ENCODE measurements at regions of chr14 and their contacts with region 1.

Region 1: GRCh38 chr14:91177073-91178034 is 63.5 kb downstream of the DGLUCY start:
- DNase-seq: peak; percentile 46 to 76 (median 69)
- H3K4me3 ChIP-seq: no peak overlapping the region
- H3K4me3 Mint-ChIP-seq: peak overlapping the region in 1 of 7 donors; percentile 34
- H3K27ac ChIP-seq: no peak overlapping the region
- H3K27ac Mint-ChIP-seq: peak overlapping the region; percentile 70 to 95 (median 80)
- H3K4me1 ChIP-seq: peaks cover 10% of the 10 kb centered on the region
- H3K4me1 Mint-ChIP-seq: peaks cover 11 to 18% (median 16%) of the 10 kb centered on the region in 3 donors
- H3K27me3 ChIP-seq: no peaks in the 10 kb centered on the region
- H3K27me3 Mint-ChIP-seq: peaks cover 0 to 1% of the 10 kb centered on the region in 2 donors

Region 2: DNA sequence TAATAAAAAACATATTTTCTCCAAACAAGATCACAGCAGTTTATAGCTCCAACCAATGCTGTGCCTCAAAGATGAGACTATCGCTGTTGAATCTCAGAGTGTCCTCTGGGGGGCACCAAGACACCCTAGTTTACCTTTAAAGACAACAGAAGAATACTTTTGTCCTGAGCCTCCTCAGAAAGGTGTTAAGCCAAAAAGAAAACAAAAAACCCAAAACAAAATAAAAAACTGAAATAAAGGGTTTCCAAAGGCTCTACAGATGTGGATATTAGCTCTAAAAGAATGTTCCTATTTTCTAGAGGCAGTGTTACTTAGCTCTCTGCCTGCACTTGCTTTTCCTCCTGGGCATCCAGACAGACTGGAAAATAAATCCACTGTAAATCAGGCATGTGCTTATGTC is 274.3 kb before region 1 on chr14:
- CTCF ChIA-PET with region 1: interaction called, 120 read pairs
- POLR2A ChIA-PET with region 1: interaction called, 7 read pairs
- DNase-seq: peak; percentile 24 to 66 (median 45)
- H3K4me3 ChIP-seq: no peak overlapping the region
- H3K4me3 Mint-ChIP-seq: no peak overlapping the region
- H3K27ac ChIP-seq: no peak overlapping the region
- H3K27ac Mint-ChIP-seq: peak overlapping the region in 2 of 8 donors; percentile 38 to 48
- H3K4me1 ChIP-seq: no peaks in the 10 kb centered on the region
- H3K4me1 Mint-ChIP-seq: peaks cover 0 to 7% (median 0%) of the 10 kb centered on the region in 3 donors
- H3K27me3 ChIP-seq: no peaks in the 10 kb centered on the region
- H3K27me3 Mint-ChIP-seq: no peaks in the 10 kb centered on the region

Region 3: GRCh38 chr14:91164685-91165084 is 12.7 kb before region 1 on chr14:
- CTCF ChIA-PET with region 1: interaction called, 15 read pairs
- POLR2A ChIA-PET with region 1: no interaction called
- DNase-seq: no peak
- H3K4me3 ChIP-seq: no peak overlapping the region
- H3K4me3 Mint-ChIP-seq: no peak overlapping the region
- H3K27ac ChIP-seq: no peak overlapping the region
- H3K27ac Mint-ChIP-seq: peak overlapping the region in 5 of 8 donors; percentile 12 to 79 (median 39)
- H3K4me1 ChIP-seq: no peaks in the 10 kb centered on the region
- H3K4me1 Mint-ChIP-seq: peaks cover 0 to 2% (median 0%) of the 10 kb centered on the region in 3 donors
- H3K27me3 ChIP-seq: no peaks in the 10 kb centered on the region
- H3K27me3 Mint-ChIP-seq: no peaks in the 10 kb centered on the region

Region 4: GRCh38 chr14:91220581-91221274 is 43.4 kb after region 1 on chr14:
- CTCF ChIA-PET with region 1: interaction called, 10 read pairs
- POLR2A ChIA-PET with region 1: no interaction called
- DNase-seq: no peak
- H3K4me3 ChIP-seq: no peak overlapping the region
- H3K4me3 Mint-ChIP-seq: no peak overlapping the region
- H3K27ac ChIP-seq: no peak overlapping the region
- H3K27ac Mint-ChIP-seq: peak overlapping the region in 7 of 8 donors; percentile 43 to 87 (median 58)
- H3K4me1 ChIP-seq: peaks cover 25% of the 10 kb centered on the region
- H3K4me1 Mint-ChIP-seq: peaks cover 37 to 62% (median 54%) of the 10 kb centered on the region in 3 donors
- H3K27me3 ChIP-seq: no peaks in the 10 kb centered on the region
- H3K27me3 Mint-ChIP-seq: no peaks in the 10 kb centered on the region

Region 5: GRCh38 chr14:91249841-91250616 is 72.7 kb after region 1 on chr14:
- CTCF ChIA-PET with region 1: interaction called, 43 read pairs
- POLR2A ChIA-PET with region 1: interaction called, 3 read pairs
- DNase-seq: peak in 4 of 5 donors; percentile 46 to 79 (median 53)
- H3K4me3 ChIP-seq: peak overlapping the region; percentile 30
- H3K4me3 Mint-ChIP-seq: peak overlapping the region; percentile 60 to 81 (median 77)
- H3K27ac ChIP-seq: peak overlapping the region; percentile 79
- H3K27ac Mint-ChIP-seq: peak overlapping the region; percentile 90 to 98 (median 93)
- H3K4me1 ChIP-seq: peaks cover 87% of the 10 kb centered on the region
- H3K4me1 Mint-ChIP-seq: peaks cover 74 to 89% (median 89%) of the 10 kb centered on the region in 3 donors
- H3K27me3 ChIP-seq: no peaks in the 10 kb centered on the region
- H3K27me3 Mint-ChIP-seq: peaks cover 0 to 2% of the 10 kb centered on the region in 2 donors

Region 6: DNA sequence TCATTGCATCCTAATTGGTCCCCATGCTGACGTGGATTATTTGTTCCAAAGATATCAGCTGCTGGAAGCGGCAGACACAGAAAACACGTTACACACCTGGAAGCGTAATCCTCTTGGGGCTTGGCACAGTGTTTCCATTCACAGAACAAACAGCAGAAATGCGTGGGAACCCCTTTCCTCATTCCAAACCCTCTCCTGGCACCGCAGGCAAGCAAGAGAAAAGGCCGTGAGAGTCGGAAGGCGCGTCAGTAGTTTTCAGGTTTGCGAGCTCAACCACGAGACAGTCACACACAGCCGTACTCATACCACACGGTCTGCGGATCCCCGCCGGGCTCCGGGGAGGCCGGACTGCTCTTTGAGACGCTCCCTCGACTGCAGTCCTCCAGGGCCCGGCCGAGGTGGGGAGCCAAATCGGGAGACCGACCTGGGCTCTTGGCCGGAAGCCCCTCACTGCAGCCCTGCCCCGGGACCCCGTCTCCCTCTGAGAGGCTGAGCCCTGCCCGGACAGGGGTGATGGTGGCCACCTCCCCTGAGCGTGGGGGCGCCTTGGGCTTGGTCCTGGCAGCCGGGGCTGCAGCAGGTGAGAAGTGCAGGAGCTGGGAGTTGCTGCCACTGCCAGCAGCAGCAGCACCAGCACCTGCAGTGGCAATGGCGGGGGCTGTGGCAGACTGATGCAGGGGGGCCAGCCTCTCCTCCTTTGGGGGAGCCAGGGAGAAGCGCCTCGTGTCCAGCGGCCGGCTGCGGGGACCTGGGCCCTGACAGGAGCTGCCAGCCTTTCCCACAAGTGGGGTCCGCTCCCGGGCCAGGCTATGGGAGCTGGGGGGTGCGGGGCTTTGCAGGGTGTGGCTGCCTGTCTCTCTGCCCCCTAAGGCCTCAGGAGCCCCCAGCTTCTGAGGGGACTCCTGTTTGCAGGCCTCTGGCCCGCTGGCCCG is 95.3 kb after region 1 on chr14:
- CTCF ChIA-PET with region 1: interaction called, 43 read pairs
- POLR2A ChIA-PET with region 1: interaction called, 5 read pairs
- DNase-seq: no peak
- H3K4me3 ChIP-seq: no peak overlapping the region
- H3K4me3 Mint-ChIP-seq: peak overlapping the region in 1 of 7 donors; percentile 56
- H3K27ac ChIP-seq: no peak overlapping the region
- H3K27ac Mint-ChIP-seq: peak overlapping the region in 4 of 8 donors; percentile 56 to 86 (median 74)
- H3K4me1 ChIP-seq: no peaks in the 10 kb centered on the region
- H3K4me1 Mint-ChIP-seq: peaks cover 11 to 17% (median 15%) of the 10 kb centered on the region in 3 donors
- H3K27me3 ChIP-seq: no peaks in the 10 kb centered on the region
- H3K27me3 Mint-ChIP-seq: peaks cover 0 to 7% of the 10 kb centered on the region in 2 donors

Region 7: GRCh38 chr14:91286530-91286937 is 109.2 kb after region 1 on chr14:
- CTCF ChIA-PET with region 1: interaction called, 199 read pairs
- POLR2A ChIA-PET with region 1: interaction called, 16 read pairs
- DNase-seq: peak; percentile 62 to 82 (median 69)
- H3K4me3 ChIP-seq: no peak overlapping the region
- H3K4me3 Mint-ChIP-seq: no peak overlapping the region
- H3K27ac ChIP-seq: no peak overlapping the region
- H3K27ac Mint-ChIP-seq: peak overlapping the region; percentile 3 to 73 (median 54)
- H3K4me1 ChIP-seq: no peaks in the 10 kb centered on the region
- H3K4me1 Mint-ChIP-seq: peaks cover 8 to 12% (median 11%) of the 10 kb centered on the region in 3 donors
- H3K27me3 ChIP-seq: no peaks in the 10 kb centered on the region
- H3K27me3 Mint-ChIP-seq: peaks cover 0 to 2% of the 10 kb centered on the region in 2 donors

Measured in CD8-positive, alpha-beta memory T cell (primary cell).